AG04450 (cell line): ENCODE measurements at regions of chr12 and their contacts with region 1.

Region 1: DNA sequence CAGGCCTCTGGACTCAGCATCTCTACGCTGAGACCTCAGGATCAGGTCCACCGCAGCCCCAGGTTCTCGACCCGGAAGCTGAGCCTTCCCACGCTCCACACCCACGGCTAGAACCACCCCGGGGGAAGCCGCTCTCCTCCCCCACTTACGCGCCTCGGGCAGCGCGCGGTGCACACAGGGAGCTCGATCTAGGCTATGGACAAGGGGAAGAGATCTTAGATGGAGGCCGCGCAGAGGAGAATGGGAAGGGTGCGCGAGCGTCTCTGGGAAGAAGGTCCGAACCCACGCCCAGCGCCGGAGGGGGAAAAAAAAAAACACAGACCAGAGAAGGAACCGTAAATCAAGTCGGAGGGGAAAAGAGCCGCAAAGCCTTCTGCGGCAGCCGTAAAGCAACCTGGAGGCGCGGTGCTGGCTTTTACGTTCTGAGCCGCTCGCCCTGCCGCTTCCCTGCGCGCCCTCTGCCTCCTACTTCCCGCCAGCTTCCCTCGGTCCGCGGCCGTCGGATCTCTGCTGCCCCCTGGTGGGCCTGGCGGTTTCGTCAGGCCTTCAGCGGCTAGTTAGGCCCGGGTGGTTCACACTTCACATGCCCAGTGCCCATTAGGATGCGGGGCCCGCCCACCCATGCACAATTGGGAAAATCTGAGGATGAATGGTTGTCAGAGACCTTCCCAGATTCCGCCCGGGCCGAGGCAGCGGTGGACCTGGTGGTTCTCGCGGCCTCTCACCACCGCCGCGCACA is at the start of gene RAD52:
- DNase-seq: peak; percentile 98
- H3K4me3 ChIP-seq: peak within 1 kb of the TSS; percentile 94
- H3K27ac ChIP-seq: peak within 1 kb of the TSS; percentile 93
- H3K27me3 ChIP-seq: no peaks in the 10 kb centered on the region
- CTCF ChIP-seq: peak; percentile 94
- polyA plus RNA-seq, gene RAD52: 13.8 and 18.8 TPM in 2 replicates

Region 2: GRCh38 chr12:569803-570434 is 379.7 kb before region 1 on chr12:
- CTCF ChIA-PET with region 1: interaction called, 11 read pairs
- POLR2A ChIA-PET with region 1: interaction called, 6 read pairs
- DNase-seq: peak; percentile 48
- H3K4me3 ChIP-seq: peak overlapping the region; percentile 69
- H3K27ac ChIP-seq: peak overlapping the region; percentile 69
- H3K27me3 ChIP-seq: peaks cover 10% of the 10 kb centered on the region
- CTCF ChIP-seq: peak; percentile 90

Region 3: GRCh38 chr12:968545-968944 is 18.9 kb after region 1 on chr12:
- CTCF ChIA-PET with region 1: interaction called, 19 read pairs
- POLR2A ChIA-PET with region 1: no interaction called
- DNase-seq: no peak
- H3K4me3 ChIP-seq: no peak overlapping the region
- H3K27ac ChIP-seq: no peak overlapping the region
- H3K27me3 ChIP-seq: no peaks in the 10 kb centered on the region
- CTCF ChIP-seq: no peak

Region 4: DNA sequence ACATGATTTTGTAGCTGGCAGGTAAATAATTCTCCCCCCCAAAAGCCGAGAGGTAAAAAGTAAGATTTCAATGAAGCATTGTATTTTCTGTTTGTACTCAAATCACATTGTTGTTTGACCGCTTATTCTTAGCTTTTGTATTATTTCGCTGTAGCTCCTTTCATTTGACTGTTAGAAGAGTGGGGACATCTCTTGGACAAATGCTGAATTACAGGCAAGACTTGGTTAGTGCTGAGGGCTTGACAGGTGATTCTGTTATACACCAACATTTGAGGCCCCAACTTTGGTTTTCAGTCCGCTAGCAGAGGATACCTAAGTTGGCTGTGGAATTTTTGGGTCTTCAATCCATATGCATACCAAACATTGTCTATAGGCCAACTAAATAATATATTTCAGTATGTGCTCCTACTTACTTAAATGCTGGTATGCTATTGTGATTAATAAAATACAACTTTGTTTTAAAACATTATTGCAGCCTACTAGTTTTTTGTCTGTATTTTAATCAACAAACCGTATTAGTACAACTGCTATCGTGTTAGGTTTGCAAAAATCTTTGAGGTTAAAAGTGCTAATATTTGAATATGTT is 143.6 kb after region 1 on chr12:
- CTCF ChIA-PET with region 1: interaction called, 23 read pairs
- POLR2A ChIA-PET with region 1: interaction called, 5 read pairs
- DNase-seq: peak; percentile 24
- H3K4me3 ChIP-seq: no peak overlapping the region
- H3K27ac ChIP-seq: no peak overlapping the region
- H3K27me3 ChIP-seq: no peaks in the 10 kb centered on the region
- CTCF ChIP-seq: peak; percentile 86